H1 (cell line): ENCODE measurements at regions of chr16 and their contacts with region 1.

Region 1: GRCh38 chr16:68022704-68023522 is at the starts of genes DDX28 and DUS2:
- DNase-seq: peak; percentile 70 to 99
- H3K4me3 ChIP-seq: peak within 1 kb of the TSS; percentile 89 to 99 (median 96)
- H3K27ac ChIP-seq: peak within 1 kb of the TSS; percentile 97
- H3K4me1 ChIP-seq: peaks cover 0 to 8% (median 5%) of the 10 kb centered on the region in 4 experiments; a peak in 5 of 7 replicates
- H3K27me3 ChIP-seq: no peaks in the 10 kb centered on the region
- CTCF ChIP-seq: no peak
- EP300 ChIP-seq: peak in 1 of 2 experiments; percentile 17; a peak in 1 of 3 replicates
- POLR2A ChIP-seq: peak; percentile 93 to 98
- RAD21 ChIP-seq: no peak; a peak in 1 of 4 replicates
- total RNA-seq, gene DDX28: 16.8 and 17.2 TPM in 2 replicates
- total RNA-seq, gene DUS2: 24.5 and 27.0 TPM in 2 replicates

Region 2: GRCh38 chr16:67877064-67877463 is 145.8 kb before region 1 on chr16:
- CTCF ChIA-PET with region 1: no interaction called
- POLR2A ChIA-PET with region 1: no interaction called
- DNase-seq: no peak
- H3K4me3 ChIP-seq: no peak overlapping the region
- H3K27ac ChIP-seq: no peak overlapping the region
- H3K4me1 ChIP-seq: peaks cover 0 to 7% (median 3%) of the 10 kb centered on the region in 4 experiments; a peak in 3 of 7 replicates
- H3K27me3 ChIP-seq: no peaks in the 10 kb centered on the region
- CTCF ChIP-seq: no peak
- EP300 ChIP-seq: no peak
- POLR2A ChIP-seq: no peak
- RAD21 ChIP-seq: no peak

Region 3: GRCh38 chr16:67935402-67936123 is 87.3 kb before region 1 on chr16:
- CTCF ChIA-PET with region 1: interaction called, 3 read pairs
- POLR2A ChIA-PET with region 1: interaction called, 11 read pairs
- DNase-seq: peak; percentile 90 to 93
- H3K4me3 ChIP-seq: peak overlapping the region; percentile 69 to 98 (median 92)
- H3K27ac ChIP-seq: peak overlapping the region; percentile 74; the same call in 1 of the 2 replicates
- H3K4me1 ChIP-seq: peaks cover 0 to 15% (median 8%) of the 10 kb centered on the region in 4 experiments; a peak in 5 of 7 replicates
- H3K27me3 ChIP-seq: no peaks in the 10 kb centered on the region
- CTCF ChIP-seq: no peak
- EP300 ChIP-seq: no peak
- POLR2A ChIP-seq: peak; percentile 49 to 73
- RAD21 ChIP-seq: no peak

Region 4: GRCh38 chr16:67993189-67994039 is 29.5 kb before region 1 on chr16:
- CTCF ChIA-PET with region 1: interaction called, 13 read pairs
- POLR2A ChIA-PET with region 1: interaction called, 26 read pairs
- DNase-seq: peak in 1 of 2 experiments; percentile 93
- H3K4me3 ChIP-seq: no peak overlapping the region
- H3K27ac ChIP-seq: no peak overlapping the region
- H3K4me1 ChIP-seq: no peaks in the 10 kb centered on the region; a peak in 3 of 7 replicates
- H3K27me3 ChIP-seq: peaks cover 0 to 12% (median 8%) of the 10 kb centered on the region in 4 experiments; a peak in 5 of 7 replicates
- CTCF ChIP-seq: peak; percentile 90 to 97 (median 94)
- EP300 ChIP-seq: no peak
- POLR2A ChIP-seq: no peak
- RAD21 ChIP-seq: peak; percentile 53 to 65

Region 5: GRCh38 chr16:68000450-68000849 is 22.5 kb before region 1 on chr16:
- CTCF ChIA-PET with region 1: interaction called, 13 read pairs
- POLR2A ChIA-PET with region 1: interaction called, 23 read pairs
- DNase-seq: no peak
- H3K4me3 ChIP-seq: no peak overlapping the region
- H3K27ac ChIP-seq: no peak overlapping the region
- H3K4me1 ChIP-seq: no peaks in the 10 kb centered on the region
- H3K27me3 ChIP-seq: no peaks in the 10 kb centered on the region
- CTCF ChIP-seq: no peak
- EP300 ChIP-seq: no peak
- POLR2A ChIP-seq: no peak
- RAD21 ChIP-seq: no peak

Region 6: GRCh38 chr16:68005786-68006286 is 17.1 kb before region 1 on chr16:
- CTCF ChIA-PET with region 1: interaction called, 5 read pairs
- POLR2A ChIA-PET with region 1: interaction called, 23 read pairs
- DNase-seq: no peak
- H3K4me3 ChIP-seq: no peak overlapping the region
- H3K27ac ChIP-seq: no peak overlapping the region
- H3K4me1 ChIP-seq: peaks cover 0 to 6% (median 3%) of the 10 kb centered on the region in 4 experiments; a peak in 3 of 7 replicates
- H3K27me3 ChIP-seq: no peaks in the 10 kb centered on the region
- CTCF ChIP-seq: no peak
- EP300 ChIP-seq: no peak
- POLR2A ChIP-seq: no peak
- RAD21 ChIP-seq: no peak

Region 7: DNA sequence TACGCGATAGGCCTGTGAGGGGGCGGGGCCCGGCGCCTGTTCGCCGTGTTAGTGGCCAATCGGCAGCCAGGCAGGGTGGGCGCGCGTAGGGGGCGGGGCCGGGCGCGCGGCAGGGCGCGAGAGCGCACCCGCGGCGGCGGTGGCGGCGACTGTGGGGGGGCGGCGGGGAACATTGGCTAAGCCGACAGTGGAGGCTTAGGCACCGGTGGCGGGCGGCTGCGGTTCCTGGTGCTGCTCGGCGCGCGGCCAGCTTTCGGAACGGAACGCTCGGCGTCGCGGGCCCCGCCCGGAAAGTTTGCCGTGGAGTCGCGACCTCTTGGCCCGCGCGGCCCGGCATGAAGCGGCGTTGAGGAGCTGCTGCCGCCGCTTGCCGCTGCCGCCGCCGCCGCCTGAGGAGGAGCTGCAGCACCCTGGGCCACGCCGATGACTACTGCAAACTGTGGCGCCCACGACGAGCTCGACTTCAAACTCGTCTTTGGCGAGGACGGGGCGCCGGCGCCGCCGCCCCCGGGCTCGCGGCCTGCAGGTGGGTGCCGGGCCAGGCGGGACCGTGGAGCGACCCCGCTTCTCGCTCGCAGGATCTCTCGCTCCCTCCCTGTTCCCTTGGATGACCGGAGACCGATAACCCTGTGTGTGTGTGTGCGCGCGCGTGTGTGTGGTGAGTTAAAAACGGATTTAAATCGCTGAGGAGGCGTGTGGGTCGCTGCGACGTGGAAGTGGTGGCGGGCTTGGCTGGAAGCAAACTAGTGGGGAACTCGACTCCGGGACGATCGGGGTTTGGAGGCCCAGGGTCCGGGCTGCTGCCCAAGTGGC is 62.6 kb after region 1 on chr16 and contains the start of gene NFATC3:
- CTCF ChIA-PET with region 1: no interaction called
- POLR2A ChIA-PET with region 1: interaction called, 15 read pairs
- DNase-seq: peak; percentile 85 to 97
- H3K4me3 ChIP-seq: peak within 1 kb of the TSS; percentile 91 to 99 (median 96)
- H3K27ac ChIP-seq: peak within 1 kb of the TSS; percentile 89
- H3K4me1 ChIP-seq: peaks cover 0 to 11% (median 6%) of the 10 kb centered on the region in 4 experiments; a peak in 5 of 7 replicates
- H3K27me3 ChIP-seq: no peaks in the 10 kb centered on the region
- CTCF ChIP-seq: no peak
- EP300 ChIP-seq: no peak
- POLR2A ChIP-seq: peak in 1 of 2 experiments; percentile 44; a peak in 1 of 3 replicates
- RAD21 ChIP-seq: no peak
- total RNA-seq, gene NFATC3: 30.2 and 34.5 TPM in 2 replicates

Region 8: DNA sequence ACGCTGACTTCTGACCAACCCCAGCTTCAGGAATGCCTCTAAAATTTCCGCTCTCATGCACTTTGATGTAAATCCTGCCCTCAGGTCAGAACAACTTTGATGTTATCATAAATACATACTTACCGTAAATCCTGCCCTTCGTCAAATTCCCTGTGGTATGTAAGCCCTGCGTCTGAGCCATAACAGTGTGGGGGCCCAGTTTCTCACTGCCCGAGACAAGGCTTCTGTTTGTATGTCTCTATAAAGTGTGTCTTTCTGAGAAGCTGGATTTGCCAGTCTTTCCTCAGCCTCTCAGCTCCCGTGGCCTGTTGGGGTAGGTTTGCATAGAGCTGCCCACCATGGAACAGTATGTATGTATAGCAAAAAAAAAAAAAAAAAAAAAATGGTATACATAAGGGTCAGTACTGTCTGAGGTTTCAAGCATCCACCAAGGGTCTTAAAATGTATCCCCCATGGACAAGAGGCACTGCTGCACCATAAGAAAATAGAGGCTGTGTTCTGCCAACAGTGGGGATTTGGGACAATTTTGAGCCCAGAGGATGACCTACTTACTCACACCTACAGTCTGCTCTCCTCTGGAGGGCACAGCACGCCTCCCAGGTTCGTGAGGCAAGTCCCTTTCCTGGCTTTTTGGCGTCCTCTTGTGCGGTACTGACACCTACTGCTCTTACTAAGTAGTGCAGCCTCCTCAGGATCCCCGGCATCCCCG is 305.4 kb after region 1 on chr16:
- CTCF ChIA-PET with region 1: no interaction called
- POLR2A ChIA-PET with region 1: no interaction called
- DNase-seq: peak; percentile 69 to 90
- H3K4me3 ChIP-seq: no peak overlapping the region
- H3K27ac ChIP-seq: no peak overlapping the region
- H3K4me1 ChIP-seq: peaks cover 0 to 4% (median 1%) of the 10 kb centered on the region in 4 experiments; a peak in 2 of 7 replicates
- H3K27me3 ChIP-seq: no peaks in the 10 kb centered on the region
- CTCF ChIP-seq: peak; percentile 86 to 96 (median 94)
- EP300 ChIP-seq: no peak
- POLR2A ChIP-seq: no peak
- RAD21 ChIP-seq: peak; percentile 95